Activated CD8-positive, alpha-beta T cell treated with anti-CD3 and anti-CD28 coated beads for 36 hours (primary cell): ENCODE measurements at regions of chr1 and their contacts with region 1.

Region 1: DNA sequence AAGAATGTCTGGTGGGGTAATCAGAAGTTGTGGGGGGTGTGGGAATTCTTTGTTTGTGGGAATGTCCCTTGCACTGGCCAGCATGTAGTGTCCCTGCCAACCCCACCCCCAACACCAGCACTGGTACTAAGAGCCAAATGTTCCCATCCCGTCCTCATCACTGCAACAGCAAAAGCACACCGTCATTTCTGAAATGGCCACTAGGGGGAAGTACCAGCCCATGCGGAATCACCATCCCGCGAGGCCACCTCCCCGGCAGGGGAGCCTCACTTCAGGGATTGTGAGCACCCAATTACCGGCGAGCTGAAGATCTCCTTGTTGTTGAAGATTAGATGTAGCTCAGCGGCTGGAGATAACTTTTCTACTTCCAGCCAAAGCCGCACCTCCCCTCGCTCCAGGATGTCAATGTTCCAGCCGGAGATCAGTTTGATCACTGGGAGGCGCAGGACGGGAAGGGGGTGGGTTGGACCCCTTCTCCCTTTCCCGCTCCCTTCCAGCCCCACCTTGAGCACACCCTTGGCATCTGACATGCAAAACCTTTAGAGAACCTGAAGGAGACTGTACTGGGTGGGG is 41.0 kb downstream of the MYOM3 start:
- DNase-seq: peak; percentile 87
- ATAC-seq: peak; percentile 98
- H3K4me3 Mint-ChIP-seq: no peak overlapping the region
- H3K27ac Mint-ChIP-seq: no peak overlapping the region
- H3K4me1 Mint-ChIP-seq: no peaks in the 10 kb centered on the region
- H3K27me3 Mint-ChIP-seq: peaks cover 2% of the 10 kb centered on the region
- CTCF ChIP-seq: peak; percentile 81

Region 2: DNA sequence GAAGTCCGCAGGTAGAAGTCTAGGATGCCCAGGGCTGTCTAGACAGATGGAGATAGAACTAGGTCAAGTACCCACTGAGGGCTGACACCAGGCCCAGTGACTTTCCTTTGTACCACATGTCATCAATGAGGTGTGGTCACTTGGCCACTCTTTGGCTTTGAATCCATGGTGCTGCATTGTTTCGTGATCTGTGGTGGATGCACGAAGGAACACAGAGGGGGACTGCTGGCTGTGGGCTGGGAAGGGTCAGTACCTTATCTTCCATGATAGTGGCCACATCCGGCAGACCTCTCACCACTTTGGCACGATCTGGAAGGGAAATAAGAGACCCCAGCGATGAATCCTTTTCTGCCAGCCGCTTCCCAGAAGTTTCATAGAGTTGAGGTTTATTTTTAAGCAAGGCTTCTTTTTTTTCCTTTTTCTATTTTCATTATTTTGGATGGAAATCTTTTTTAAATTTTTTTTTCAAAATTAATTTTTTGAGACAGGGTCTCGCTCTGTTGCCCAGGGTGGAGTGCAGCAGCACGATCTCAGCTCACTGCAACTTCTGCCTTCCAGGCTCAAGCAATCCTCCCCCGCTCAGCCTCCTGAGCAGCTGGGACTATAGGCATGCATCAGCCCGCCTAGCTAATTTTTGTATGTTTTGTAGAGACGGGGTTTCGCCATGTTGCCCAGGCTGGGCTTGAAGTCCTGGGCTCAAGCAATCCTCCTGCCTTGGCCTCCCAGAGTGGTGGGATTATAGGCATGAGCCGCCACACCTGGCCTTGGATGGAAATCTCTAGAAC is 12.0 kb before region 1 on chr1:
- CTCF ChIA-PET with region 1: interaction called, 14 read pairs
- POLR2A ChIA-PET with region 1: interaction called, 3 read pairs
- intact Hi-C with region 1: no loop called
- DNase-seq: no peak
- ATAC-seq: no peak
- H3K4me3 Mint-ChIP-seq: no peak overlapping the region
- H3K27ac Mint-ChIP-seq: no peak overlapping the region
- H3K4me1 Mint-ChIP-seq: no peaks in the 10 kb centered on the region
- H3K27me3 Mint-ChIP-seq: peaks cover 1% of the 10 kb centered on the region
- CTCF ChIP-seq: no peak

Region 3: GRCh38 chr1:24111996-24112779 is 41.3 kb after region 1 on chr1 and contains the start of gene MYOM3:
- CTCF ChIA-PET with region 1: interaction called, 19 read pairs
- POLR2A ChIA-PET with region 1: interaction called, 3 read pairs
- intact Hi-C with region 1: no loop called
- DNase-seq: peak; percentile 86
- ATAC-seq: peak; percentile 99
- H3K4me3 Mint-ChIP-seq: no peak within 1 kb of the TSS
- H3K27ac Mint-ChIP-seq: no peak within 1 kb of the TSS
- H3K4me1 Mint-ChIP-seq: peaks cover 5% of the 10 kb centered on the region
- H3K27me3 Mint-ChIP-seq: peaks cover 15% of the 10 kb centered on the region
- CTCF ChIP-seq: peak; percentile 58
- total RNA-seq, gene MYOM3: not detected